ENCODE measurements at regions of chr1 and their contacts with region 1.

Region 1: GRCh38 chr1:39901698-39902459 is at the start of gene MYCL:
- DNase-seq: peak; percentile 97
- ATAC-seq: peak; percentile 81
- H3K4me3 Mint-ChIP-seq: peak within 1 kb of the TSS; percentile 86
- H3K27ac Mint-ChIP-seq: peak within 1 kb of the TSS; percentile 74; the same call in 1 of the 2 replicates
- H3K4me1 Mint-ChIP-seq: peaks cover 46% of the 10 kb centered on the region
- H3K27me3 Mint-ChIP-seq: peaks cover 30% of the 10 kb centered on the region
- CTCF ChIP-seq: peak; percentile 56
- total RNA-seq, gene MYCL: 31.0 to 32.6 TPM (median 32.2 TPM) in 3 replicates

Region 2: GRCh38 chr1:39434797-39435395 is 467.0 kb before region 1 on chr1:
- CTCF ChIA-PET with region 1: no interaction called
- POLR2A ChIA-PET with region 1: no interaction called
- DNase-seq: no peak
- ATAC-seq: no peak
- H3K4me3 Mint-ChIP-seq: no peak overlapping the region
- H3K27ac Mint-ChIP-seq: peak overlapping the region; percentile 9; the same call in 1 of the 2 replicates
- H3K4me1 Mint-ChIP-seq: no peaks in the 10 kb centered on the region
- H3K27me3 Mint-ChIP-seq: no peaks in the 10 kb centered on the region; the same call in 1 of the 2 replicates
- CTCF ChIP-seq: no peak

Region 3: DNA sequence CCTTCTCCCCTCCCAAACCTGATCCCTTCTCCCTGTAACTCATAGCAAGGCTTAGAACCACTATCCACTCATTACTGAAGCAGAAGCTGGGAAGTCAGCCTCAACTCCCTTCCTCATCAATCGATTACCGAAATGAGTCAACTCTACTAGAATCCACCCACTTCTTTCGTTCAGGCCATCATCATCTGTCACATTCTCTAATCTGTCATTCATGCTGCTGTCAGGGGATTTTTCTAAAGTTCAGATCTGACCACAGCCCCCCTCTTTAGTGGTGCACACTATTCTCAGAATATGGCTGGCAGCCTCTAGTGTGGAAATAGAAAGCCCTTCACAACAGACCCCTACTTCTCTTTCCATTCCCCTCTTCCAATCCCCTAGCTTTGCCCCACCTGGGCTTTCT is 235.1 kb before region 1 on chr1:
- CTCF ChIA-PET with region 1: no interaction called
- POLR2A ChIA-PET with region 1: no interaction called
- DNase-seq: no peak
- ATAC-seq: no peak
- H3K4me3 Mint-ChIP-seq: no peak overlapping the region
- H3K27ac Mint-ChIP-seq: no peak overlapping the region
- H3K4me1 Mint-ChIP-seq: no peaks in the 10 kb centered on the region
- H3K27me3 Mint-ChIP-seq: peaks cover 100% of the 10 kb centered on the region
- CTCF ChIP-seq: no peak

Region 4: GRCh38 chr1:39816415-39817090 is 85.3 kb before region 1 on chr1:
- CTCF ChIA-PET with region 1: interaction called, 49 read pairs
- POLR2A ChIA-PET with region 1: interaction called, 3 read pairs
- DNase-seq: peak; percentile 67
- ATAC-seq: peak; percentile 84
- H3K4me3 Mint-ChIP-seq: no peak overlapping the region
- H3K27ac Mint-ChIP-seq: no peak overlapping the region
- H3K4me1 Mint-ChIP-seq: peaks cover 5% of the 10 kb centered on the region; the same call in 1 of the 2 replicates
- H3K27me3 Mint-ChIP-seq: peaks cover 13% of the 10 kb centered on the region
- CTCF ChIP-seq: peak; percentile 79

Region 5: GRCh38 chr1:39845275-39846116 is 56.4 kb before region 1 on chr1:
- CTCF ChIA-PET with region 1: interaction called, 14 read pairs
- POLR2A ChIA-PET with region 1: no interaction called
- DNase-seq: no peak
- ATAC-seq: no peak
- H3K4me3 Mint-ChIP-seq: no peak overlapping the region
- H3K27ac Mint-ChIP-seq: no peak overlapping the region
- H3K4me1 Mint-ChIP-seq: no peaks in the 10 kb centered on the region
- H3K27me3 Mint-ChIP-seq: no peaks in the 10 kb centered on the region
- CTCF ChIP-seq: no peak

Region 6: GRCh38 chr1:39954816-39955546 is 53.1 kb after region 1 on chr1 and contains the start of gene MFSD2A:
- CTCF ChIA-PET with region 1: interaction called, 15 read pairs
- POLR2A ChIA-PET with region 1: no interaction called
- DNase-seq: peak; percentile 95
- ATAC-seq: peak; percentile 93
- H3K4me3 Mint-ChIP-seq: peak within 1 kb of the TSS; percentile 85
- H3K27ac Mint-ChIP-seq: no peak within 1 kb of the TSS
- H3K4me1 Mint-ChIP-seq: peaks cover 27% of the 10 kb centered on the region
- H3K27me3 Mint-ChIP-seq: peaks cover 35% of the 10 kb centered on the region
- CTCF ChIP-seq: no peak
- total RNA-seq, gene MFSD2A: 11.5 to 14.0 TPM (median 12.9 TPM) in 3 replicates

Region 7: DNA sequence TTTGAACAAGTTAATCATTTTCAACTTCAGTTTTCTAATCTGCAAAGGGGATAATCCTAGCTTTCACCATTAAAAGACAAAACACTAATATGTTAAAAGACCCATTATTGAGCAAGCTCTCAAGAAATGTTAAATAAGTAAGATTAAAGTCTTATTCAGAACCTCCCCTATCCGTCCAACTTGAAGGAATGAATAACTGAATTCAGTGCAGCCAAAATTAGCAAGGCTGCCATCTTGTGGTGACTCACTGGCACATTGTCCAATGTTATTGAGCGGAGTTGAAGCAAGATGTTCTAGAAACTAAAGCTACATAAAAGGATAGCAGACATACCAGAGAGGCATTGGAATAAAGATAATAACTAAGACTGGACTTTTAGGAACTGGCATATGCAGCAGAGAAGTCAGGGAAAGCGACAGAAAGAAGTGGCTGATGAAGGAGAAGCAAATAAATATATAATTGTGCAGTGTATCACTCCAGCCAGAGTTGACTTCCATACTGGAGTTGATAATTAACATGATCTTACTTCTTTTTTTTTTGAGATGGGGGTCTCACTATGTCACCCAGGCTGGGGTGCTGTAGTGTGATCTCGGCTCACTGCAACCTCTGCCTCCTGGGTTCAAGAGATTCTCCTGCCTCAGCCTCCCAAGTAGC is 130.5 kb after region 1 on chr1:
- CTCF ChIA-PET with region 1: interaction called, 17 read pairs
- POLR2A ChIA-PET with region 1: interaction called, 4 read pairs
- DNase-seq: peak; percentile 31
- ATAC-seq: peak; percentile 69; the same call in 1 of the 2 replicates
- H3K4me3 Mint-ChIP-seq: no peak overlapping the region
- H3K27ac Mint-ChIP-seq: no peak overlapping the region
- H3K4me1 Mint-ChIP-seq: no peaks in the 10 kb centered on the region; the same call in 1 of the 2 replicates
- H3K27me3 Mint-ChIP-seq: peaks cover 3% of the 10 kb centered on the region
- CTCF ChIP-seq: no peak